ENCODE measurements at regions of chr21 and their contacts with region 1.

Region 1: GRCh38 chr21:17461014-17461413 is 51.8 kb upstream of the CXADR start:
- DNase-seq: no peak
- H3K4me3 ChIP-seq: no peak overlapping the region
- H3K4me3 Mint-ChIP-seq: no peak overlapping the region
- H3K27ac Mint-ChIP-seq: no peak overlapping the region
- H3K4me1 ChIP-seq: peaks cover 19% of the 10 kb centered on the region
- H3K4me1 Mint-ChIP-seq: peaks cover 10% of the 10 kb centered on the region
- H3K27me3 ChIP-seq: no peaks in the 10 kb centered on the region
- H3K27me3 Mint-ChIP-seq: no peaks in the 10 kb centered on the region
- CTCF ChIP-seq: no peak

Region 2: GRCh38 chr21:16620786-16621320 is 840.2 kb before region 1 on chr21:
- CTCF ChIA-PET with region 1: interaction called, 10 read pairs
- POLR2A ChIA-PET with region 1: no interaction called
- intact Hi-C with region 1: no loop called
- DNase-seq: no peak
- H3K4me3 ChIP-seq: no peak overlapping the region
- H3K4me3 Mint-ChIP-seq: no peak overlapping the region
- H3K27ac Mint-ChIP-seq: no peak overlapping the region
- H3K4me1 ChIP-seq: no peaks in the 10 kb centered on the region
- H3K4me1 Mint-ChIP-seq: no peaks in the 10 kb centered on the region
- H3K27me3 ChIP-seq: no peaks in the 10 kb centered on the region; the same call in 1 of the 2 replicates
- H3K27me3 Mint-ChIP-seq: no peaks in the 10 kb centered on the region
- CTCF ChIP-seq: no peak

Region 3: DNA sequence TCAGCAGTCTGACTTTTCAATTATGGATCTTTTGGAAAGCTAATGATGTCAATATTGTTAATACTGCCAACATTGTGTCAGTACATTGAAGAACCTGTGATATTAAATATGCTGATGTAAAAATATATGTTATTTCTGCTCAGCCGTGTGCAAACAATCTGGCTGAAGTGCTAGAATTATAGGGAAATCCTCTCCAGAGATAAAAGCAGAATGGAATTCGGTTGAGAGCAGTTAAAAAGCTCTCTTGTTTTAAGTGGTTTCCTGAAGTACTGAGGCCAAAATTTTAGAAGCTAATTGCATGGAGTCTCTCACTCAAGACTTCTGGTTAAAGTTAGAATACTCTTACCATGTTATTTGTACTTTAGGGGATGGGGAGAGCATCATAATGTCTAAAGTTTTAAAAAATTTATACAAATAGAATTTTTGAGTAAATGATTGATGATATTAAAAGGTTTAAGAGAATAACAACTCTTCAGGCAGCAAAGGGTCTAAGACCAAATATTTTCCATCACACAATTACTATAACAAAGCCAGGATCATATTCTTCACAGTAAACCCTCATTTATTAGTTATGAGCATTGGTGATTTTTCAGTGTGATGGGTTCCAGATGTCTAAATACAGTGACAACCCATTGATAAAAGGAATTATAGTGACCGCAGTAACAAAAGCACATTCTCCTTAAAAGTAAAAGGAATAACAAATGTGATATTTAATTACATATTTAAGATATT is 782.4 kb before region 1 on chr21:
- CTCF ChIA-PET with region 1: no interaction called
- POLR2A ChIA-PET with region 1: no interaction called
- intact Hi-C with region 1: no loop called
- DNase-seq: no peak
- H3K4me3 ChIP-seq: no peak overlapping the region
- H3K4me3 Mint-ChIP-seq: no peak overlapping the region
- H3K27ac Mint-ChIP-seq: no peak overlapping the region
- H3K4me1 ChIP-seq: no peaks in the 10 kb centered on the region
- H3K4me1 Mint-ChIP-seq: no peaks in the 10 kb centered on the region
- H3K27me3 ChIP-seq: no peaks in the 10 kb centered on the region
- H3K27me3 Mint-ChIP-seq: peaks cover 3% of the 10 kb centered on the region
- CTCF ChIP-seq: no peak

Region 4: DNA sequence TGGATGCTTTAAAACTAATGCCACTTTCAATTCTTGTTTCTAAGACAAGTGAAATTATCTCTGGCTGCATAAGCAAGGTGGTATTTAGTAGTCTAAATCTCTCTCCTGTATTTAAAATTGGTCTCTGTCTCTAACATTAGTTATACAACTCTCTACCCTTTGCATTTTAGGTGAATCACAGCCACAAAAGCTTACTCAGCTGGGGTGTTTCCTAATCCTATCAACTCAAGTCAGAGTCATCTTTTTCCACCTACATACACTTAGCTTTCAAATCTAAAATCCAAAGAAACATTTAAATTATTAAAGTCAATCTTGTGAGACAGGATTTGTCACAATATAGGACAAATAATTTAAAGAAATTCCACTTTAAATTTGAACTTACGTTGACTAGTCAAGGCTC is 203.2 kb before region 1 on chr21:
- CTCF ChIA-PET with region 1: no interaction called
- POLR2A ChIA-PET with region 1: no interaction called
- intact Hi-C with region 1: no loop called
- DNase-seq: no peak
- H3K4me3 ChIP-seq: no peak overlapping the region
- H3K4me3 Mint-ChIP-seq: no peak overlapping the region
- H3K27ac Mint-ChIP-seq: no peak overlapping the region
- H3K4me1 ChIP-seq: no peaks in the 10 kb centered on the region
- H3K4me1 Mint-ChIP-seq: no peaks in the 10 kb centered on the region
- H3K27me3 ChIP-seq: no peaks in the 10 kb centered on the region
- H3K27me3 Mint-ChIP-seq: peaks cover 14% of the 10 kb centered on the region
- CTCF ChIP-seq: no peak

Region 5: GRCh38 chr21:17501107-17502006 is 40.3 kb after region 1 on chr21:
- CTCF ChIA-PET with region 1: no interaction called
- POLR2A ChIA-PET with region 1: no interaction called
- intact Hi-C with region 1: loop called (anchors 1 kb)
- DNase-seq: peak; percentile 80 to 84
- H3K4me3 ChIP-seq: no peak overlapping the region
- H3K4me3 Mint-ChIP-seq: peak overlapping the region; percentile 19
- H3K27ac Mint-ChIP-seq: peak overlapping the region; percentile 76
- H3K4me1 ChIP-seq: peaks cover 43% of the 10 kb centered on the region
- H3K4me1 Mint-ChIP-seq: peaks cover 42% of the 10 kb centered on the region
- H3K27me3 ChIP-seq: no peaks in the 10 kb centered on the region
- H3K27me3 Mint-ChIP-seq: no peaks in the 10 kb centered on the region
- CTCF ChIP-seq: no peak

Region 6: DNA sequence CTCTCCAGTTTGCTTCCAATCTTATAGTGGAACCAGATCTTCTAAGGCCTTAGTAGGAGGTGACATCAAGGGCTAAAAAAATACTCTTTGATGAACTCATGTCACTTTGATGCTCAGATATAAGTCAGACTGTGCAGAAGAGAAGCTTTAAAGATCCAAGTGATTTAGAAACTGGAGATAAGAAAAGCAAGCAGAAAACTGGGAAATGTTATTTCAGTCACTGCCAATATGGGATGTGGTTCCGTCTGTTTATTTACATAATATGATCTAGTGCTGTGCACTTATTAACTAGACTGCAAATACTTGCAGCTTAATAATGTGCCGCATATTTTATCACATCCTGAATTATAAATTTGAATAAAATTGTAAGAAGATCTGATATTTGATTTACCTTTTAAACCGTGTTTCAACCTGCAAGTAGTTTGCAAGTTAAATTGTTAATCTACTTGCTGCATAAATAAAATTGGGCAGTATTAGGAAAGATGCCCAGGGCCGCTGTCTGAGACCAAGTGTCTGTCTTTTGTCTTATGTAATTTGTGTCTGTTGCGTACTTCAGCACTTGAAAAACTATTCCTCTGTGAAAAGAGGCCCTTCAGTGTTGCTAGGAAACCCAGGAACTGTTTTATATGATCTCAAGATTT is 81.5 kb after region 1 on chr21:
- CTCF ChIA-PET with region 1: no interaction called
- POLR2A ChIA-PET with region 1: no interaction called
- intact Hi-C with region 1: loop called (anchors 2 kb)
- DNase-seq: peak in 1 of 2 experiments; percentile 57
- H3K4me3 ChIP-seq: no peak overlapping the region
- H3K4me3 Mint-ChIP-seq: peak overlapping the region; percentile 54
- H3K27ac Mint-ChIP-seq: no peak overlapping the region
- H3K4me1 ChIP-seq: peaks cover 54% of the 10 kb centered on the region
- H3K4me1 Mint-ChIP-seq: peaks cover 71% of the 10 kb centered on the region
- H3K27me3 ChIP-seq: no peaks in the 10 kb centered on the region
- H3K27me3 Mint-ChIP-seq: no peaks in the 10 kb centered on the region
- CTCF ChIP-seq: no peak

Region 7: DNA sequence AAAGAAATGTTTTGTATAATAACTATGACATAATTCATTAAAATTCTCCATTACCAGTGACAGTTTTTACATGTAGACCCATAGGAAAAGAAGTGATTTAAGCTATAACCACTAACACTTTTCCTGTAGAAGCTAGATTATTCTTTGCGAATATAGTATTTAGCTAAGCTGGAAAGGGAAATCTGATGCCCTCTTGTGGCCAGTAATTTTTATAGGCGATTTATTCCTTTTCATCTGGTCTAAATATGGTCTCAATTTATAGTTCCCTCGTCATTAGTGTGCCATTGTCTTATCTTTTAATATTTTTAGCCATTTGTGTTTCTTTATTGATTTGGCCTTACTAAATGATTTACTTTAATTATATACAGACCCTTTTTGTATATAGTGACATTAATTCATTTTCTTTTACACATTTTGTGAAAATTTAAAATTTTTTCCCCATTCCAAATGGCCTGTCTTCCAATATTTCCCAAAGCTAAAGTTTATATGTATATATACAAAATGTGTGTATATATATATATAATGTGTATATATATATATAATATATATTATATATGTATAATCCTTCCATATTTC is 124.9 kb after region 1 on chr21:
- CTCF ChIA-PET with region 1: no interaction called
- POLR2A ChIA-PET with region 1: no interaction called
- intact Hi-C with region 1: loop called (anchors 10 kb)
- DNase-seq: peak in 1 of 2 experiments; percentile 39
- H3K4me3 ChIP-seq: no peak overlapping the region
- H3K4me3 Mint-ChIP-seq: no peak overlapping the region
- H3K27ac Mint-ChIP-seq: no peak overlapping the region
- H3K4me1 ChIP-seq: peaks cover 8% of the 10 kb centered on the region
- H3K4me1 Mint-ChIP-seq: peaks cover 12% of the 10 kb centered on the region
- H3K27me3 ChIP-seq: no peaks in the 10 kb centered on the region
- H3K27me3 Mint-ChIP-seq: no peaks in the 10 kb centered on the region
- CTCF ChIP-seq: peak; percentile 40 to 57

Region 8: DNA sequence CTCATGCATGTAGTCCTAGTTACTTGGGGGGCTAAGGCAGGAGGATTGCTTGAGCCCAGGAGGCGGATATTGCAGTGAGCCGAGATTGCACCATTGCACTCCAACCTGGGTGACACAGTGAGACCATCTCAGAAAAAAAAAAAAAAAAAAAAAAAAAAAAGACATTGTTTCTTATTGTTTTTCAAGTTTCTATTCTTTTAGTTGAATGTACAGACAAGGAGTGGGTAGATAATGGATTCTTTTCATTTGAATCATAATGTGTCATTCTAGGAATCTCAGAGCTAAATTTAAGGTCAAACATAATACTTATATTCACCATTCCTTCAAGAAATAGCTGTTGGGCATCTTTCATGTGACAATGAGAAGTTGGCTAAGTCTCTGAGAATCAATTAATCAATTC is 515.1 kb after region 1 on chr21:
- CTCF ChIA-PET with region 1: no interaction called
- POLR2A ChIA-PET with region 1: no interaction called
- intact Hi-C with region 1: no loop called
- DNase-seq: no peak
- H3K4me3 ChIP-seq: no peak overlapping the region
- H3K4me3 Mint-ChIP-seq: no peak overlapping the region
- H3K27ac Mint-ChIP-seq: no peak overlapping the region
- H3K4me1 ChIP-seq: no peaks in the 10 kb centered on the region
- H3K4me1 Mint-ChIP-seq: no peaks in the 10 kb centered on the region
- H3K27me3 ChIP-seq: no peaks in the 10 kb centered on the region
- H3K27me3 Mint-ChIP-seq: no peaks in the 10 kb centered on the region
- CTCF ChIP-seq: no peak